ENCODE measurements at regions of chr13 and their contacts with region 1.

Region 1: GRCh38 chr13:53151336-53152056 is 122.9 kb downstream of the OLFM4 start:
- DNase-seq: no peak

Region 2: DNA sequence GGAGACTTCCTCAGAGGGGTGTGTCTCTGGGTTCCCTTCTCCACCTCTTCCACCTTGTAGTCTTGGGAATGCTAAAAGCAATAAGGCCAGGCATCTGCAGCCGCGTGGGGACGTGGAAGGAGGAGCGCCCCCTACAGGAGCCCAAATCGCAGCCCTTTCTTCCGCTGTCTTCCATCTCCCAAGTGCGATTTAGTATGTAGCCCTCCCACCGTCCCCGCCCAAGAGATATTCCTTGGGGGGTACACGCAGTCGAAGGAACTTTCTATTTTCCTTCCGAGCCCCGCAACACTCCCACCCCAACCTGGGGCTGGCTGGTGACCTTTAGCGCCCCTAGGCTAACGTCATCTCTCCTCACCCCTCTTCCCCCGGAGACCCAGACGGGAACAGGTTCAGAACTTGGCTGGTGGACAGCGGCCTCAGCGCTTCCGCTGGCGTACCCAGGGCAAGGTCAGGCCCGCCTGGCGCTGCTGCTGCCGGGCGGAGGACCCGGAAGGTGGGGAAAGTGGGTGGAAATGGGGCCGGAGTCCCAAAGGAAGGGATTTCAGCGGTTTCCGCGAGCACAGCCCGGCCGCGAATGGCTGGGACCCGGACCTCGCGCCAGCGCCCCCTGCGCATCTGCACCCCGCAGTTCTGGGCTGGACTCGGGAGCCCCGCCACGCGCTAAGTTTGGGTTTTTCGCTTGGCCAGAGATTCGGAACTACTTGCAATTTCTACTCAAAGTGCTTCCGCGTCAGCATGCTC is 300.9 kb before region 1 on chr13:
- intact Hi-C with region 1: loop called (anchors 10 kb)
- DNase-seq: peak; percentile 81

Region 3: DNA sequence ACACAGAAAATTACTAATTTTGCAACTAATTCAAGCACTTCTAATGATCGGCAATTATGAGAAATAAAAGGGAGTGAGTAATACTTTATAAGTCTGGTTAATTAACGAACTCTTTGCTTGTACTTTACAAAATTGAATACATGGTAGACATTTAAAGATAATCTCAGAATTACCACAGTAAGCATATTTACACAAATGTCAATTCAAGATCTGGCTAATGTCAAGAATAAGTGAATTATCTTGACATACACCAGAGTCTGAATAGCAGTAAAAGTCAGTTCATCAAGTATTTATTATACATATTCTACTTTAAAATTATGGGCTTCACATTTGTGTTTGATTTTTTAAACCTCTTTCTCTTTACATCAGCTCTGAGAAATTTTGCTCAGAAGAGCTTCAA is 520.5 kb after region 1 on chr13:
- intact Hi-C with region 1: no loop called
- DNase-seq: no peak

Measured in cardiac septum (tissue), 1 donor.